ENCODE measurements at regions of chr9 and their contacts with region 1.

Region 1: GRCh38 chr9:75185585-75186170 is 97.4 kb downstream of the OSTF1 start:
- DNase-seq: peak; percentile 22 to 69 (median 42)
- ATAC-seq: peak; percentile 73
- H3K4me3 ChIP-seq: no peak overlapping the region
- H3K4me3 Mint-ChIP-seq: no peak overlapping the region
- H3K27ac ChIP-seq: no peak overlapping the region
- H3K27ac Mint-ChIP-seq: peak overlapping the region; percentile 20
- H3K4me1 ChIP-seq: peaks cover 5% of the 10 kb centered on the region
- H3K4me1 Mint-ChIP-seq: peaks cover 25% of the 10 kb centered on the region
- H3K27me3 ChIP-seq: no peaks in the 10 kb centered on the region
- H3K27me3 Mint-ChIP-seq: no peaks in the 10 kb centered on the region
- CTCF ChIP-seq: peak; percentile 61

Region 2: GRCh38 chr9:75142202-75142601 is 43.5 kb before region 1 on chr9:
- CTCF ChIA-PET with region 1: interaction called, 11 read pairs
- POLR2A ChIA-PET with region 1: interaction called, 3 read pairs
- intact Hi-C with region 1: loop called in 1 of 2 experiments (anchors 5 kb)
- DNase-seq: peak in 3 of 14 experiments; percentile 38 to 59 (median 47)
- ATAC-seq: no peak
- H3K4me3 ChIP-seq: no peak overlapping the region
- H3K4me3 Mint-ChIP-seq: peak overlapping the region; percentile 56
- H3K27ac ChIP-seq: peak overlapping the region; percentile 36
- H3K27ac Mint-ChIP-seq: peak overlapping the region; percentile 87
- H3K4me1 ChIP-seq: peaks cover 48% of the 10 kb centered on the region
- H3K4me1 Mint-ChIP-seq: peaks cover 83% of the 10 kb centered on the region
- H3K27me3 ChIP-seq: no peaks in the 10 kb centered on the region
- H3K27me3 Mint-ChIP-seq: no peaks in the 10 kb centered on the region
- CTCF ChIP-seq: no peak

Region 3: GRCh38 chr9:75148561-75148960 is 37.1 kb before region 1 on chr9:
- CTCF ChIA-PET with region 1: interaction called, 6 read pairs
- POLR2A ChIA-PET with region 1: interaction called, 5 read pairs
- intact Hi-C with region 1: loop called (anchors 5 kb)
- DNase-seq: peak in 2 of 14 experiments; percentile 27 to 47
- ATAC-seq: no peak
- H3K4me3 ChIP-seq: no peak overlapping the region
- H3K4me3 Mint-ChIP-seq: peak overlapping the region; percentile 83
- H3K27ac ChIP-seq: peak overlapping the region; percentile 29 to 47
- H3K27ac Mint-ChIP-seq: peak overlapping the region; percentile 92
- H3K4me1 ChIP-seq: peaks cover 55% of the 10 kb centered on the region
- H3K4me1 Mint-ChIP-seq: peaks cover 91% of the 10 kb centered on the region
- H3K27me3 ChIP-seq: no peaks in the 10 kb centered on the region
- H3K27me3 Mint-ChIP-seq: no peaks in the 10 kb centered on the region
- CTCF ChIP-seq: no peak

Region 4: GRCh38 chr9:75229605-75230332 is 44.1 kb after region 1 on chr9:
- CTCF ChIA-PET with region 1: no interaction called
- POLR2A ChIA-PET with region 1: no interaction called
- intact Hi-C with region 1: no loop called
- DNase-seq: no peak
- ATAC-seq: no peak
- H3K4me3 ChIP-seq: no peak overlapping the region
- H3K4me3 Mint-ChIP-seq: no peak overlapping the region
- H3K27ac ChIP-seq: no peak overlapping the region
- H3K27ac Mint-ChIP-seq: no peak overlapping the region
- H3K4me1 ChIP-seq: no peaks in the 10 kb centered on the region
- H3K4me1 Mint-ChIP-seq: no peaks in the 10 kb centered on the region
- H3K27me3 ChIP-seq: no peaks in the 10 kb centered on the region
- H3K27me3 Mint-ChIP-seq: no peaks in the 10 kb centered on the region
- CTCF ChIP-seq: no peak

Measured in CD4-positive, alpha-beta T cell (primary cell).